ENCODE measurements at regions of chr4 and their contacts with region 1.

Region 1: GRCh38 chr4:139603576-139604387 is 47.8 kb upstream of the SETD7 start:
- DNase-seq: peak in 1 of 2 donors; percentile 17
- ATAC-seq: peak; percentile 64

Region 2: DNA sequence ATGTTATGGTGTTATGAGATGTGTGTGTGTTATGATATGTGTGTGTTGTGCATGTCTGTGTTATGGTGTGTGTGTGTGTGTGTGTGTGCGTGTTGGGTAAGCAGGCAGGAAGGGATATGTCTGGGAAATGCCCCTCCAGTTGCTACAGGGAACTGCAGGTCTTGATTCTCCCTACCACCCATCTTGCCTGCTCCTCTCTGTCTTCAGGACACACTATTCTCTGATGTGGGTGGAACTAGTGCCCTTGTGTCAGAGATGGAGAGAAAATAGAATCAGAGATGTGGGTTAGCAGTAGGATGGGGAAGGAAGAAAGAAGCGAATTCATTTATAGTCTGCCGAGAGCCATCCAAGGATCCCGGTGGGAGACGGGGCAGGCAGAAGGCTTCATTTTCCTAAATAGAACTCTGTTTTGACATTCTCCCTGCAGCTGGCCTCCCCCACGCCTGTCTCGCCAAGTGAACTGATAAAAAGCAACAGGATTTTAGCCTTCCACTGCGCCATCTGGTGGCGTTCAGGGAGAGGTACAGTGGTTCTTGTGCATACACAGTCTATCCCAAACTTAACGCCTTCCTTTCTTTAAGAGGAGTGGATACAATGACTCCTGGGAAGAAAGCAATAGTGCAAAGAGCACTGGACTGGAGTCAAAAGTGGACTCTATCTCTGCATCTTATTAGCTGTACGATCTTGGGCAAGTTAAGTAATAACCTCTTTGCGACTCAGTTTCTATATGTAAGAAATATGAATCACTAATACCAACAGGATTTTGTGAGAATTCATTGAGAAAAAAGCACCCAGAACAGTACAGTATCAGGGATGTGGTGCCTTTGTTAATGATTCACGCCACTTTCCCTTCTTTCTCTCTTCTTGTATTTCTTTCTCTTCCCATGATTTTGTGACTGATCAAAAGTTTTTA is 47.8 kb after region 1 on chr4:
- intact Hi-C with region 1: loop called in 1 of 2 experiments (anchors 10 kb)
- DNase-seq: peak; percentile 54 to 86
- ATAC-seq: peak; percentile 79

Region 3: DNA sequence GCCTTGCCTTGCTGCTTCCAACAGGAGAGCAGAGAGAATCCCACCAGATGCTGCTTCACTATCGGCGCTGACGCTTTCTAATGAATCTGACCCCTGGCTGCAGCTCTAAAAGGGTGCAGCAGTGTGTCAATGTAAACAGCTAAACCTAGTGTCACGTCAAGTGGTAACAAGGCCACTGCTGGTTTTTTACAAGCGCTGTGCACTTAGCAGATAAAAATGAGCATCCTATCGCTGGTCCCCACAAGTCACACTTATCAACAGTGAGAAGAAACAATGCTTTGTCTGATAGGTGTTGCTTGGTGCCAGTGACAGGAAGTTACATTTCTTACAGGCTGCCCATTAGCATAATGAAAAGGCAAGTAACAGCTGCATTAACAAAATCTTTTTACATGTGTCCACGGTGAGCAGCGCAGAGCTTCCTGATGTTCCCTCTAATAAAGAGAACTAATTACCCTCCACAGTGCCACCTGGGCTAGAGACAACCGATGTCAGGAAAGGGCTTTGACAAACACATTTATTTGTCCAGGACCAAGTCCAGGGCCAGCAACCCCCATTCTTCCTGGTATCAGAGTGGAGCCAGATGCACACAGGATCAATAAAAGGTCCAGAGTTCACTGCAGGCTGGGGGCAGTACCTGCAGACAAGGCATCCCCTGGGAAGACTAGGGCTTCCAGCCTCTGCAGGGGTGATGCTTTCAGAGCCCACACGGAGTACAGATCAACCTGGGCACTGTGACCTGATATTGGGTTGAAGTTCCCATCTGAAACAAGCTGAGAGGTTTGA is 237.9 kb after region 1 on chr4:
- intact Hi-C with region 1: no loop called
- DNase-seq: peak; percentile 65 to 81
- ATAC-seq: peak; percentile 93